MCF 10A (cell line): ENCODE measurements at regions of chr10 and their contacts with region 1.

Region 1: GRCh38 chr10:60795465-60796202 is 17.4 kb downstream of the CDK1 start:
- DNase-seq: no peak
- H3K4me3 Mint-ChIP-seq: no peak overlapping the region
- H3K27ac Mint-ChIP-seq: peak overlapping the region; percentile 11
- H3K4me1 Mint-ChIP-seq: peaks cover 20% of the 10 kb centered on the region
- H3K27me3 Mint-ChIP-seq: no peaks in the 10 kb centered on the region
- CTCF ChIP-seq: no peak

Region 2: DNA sequence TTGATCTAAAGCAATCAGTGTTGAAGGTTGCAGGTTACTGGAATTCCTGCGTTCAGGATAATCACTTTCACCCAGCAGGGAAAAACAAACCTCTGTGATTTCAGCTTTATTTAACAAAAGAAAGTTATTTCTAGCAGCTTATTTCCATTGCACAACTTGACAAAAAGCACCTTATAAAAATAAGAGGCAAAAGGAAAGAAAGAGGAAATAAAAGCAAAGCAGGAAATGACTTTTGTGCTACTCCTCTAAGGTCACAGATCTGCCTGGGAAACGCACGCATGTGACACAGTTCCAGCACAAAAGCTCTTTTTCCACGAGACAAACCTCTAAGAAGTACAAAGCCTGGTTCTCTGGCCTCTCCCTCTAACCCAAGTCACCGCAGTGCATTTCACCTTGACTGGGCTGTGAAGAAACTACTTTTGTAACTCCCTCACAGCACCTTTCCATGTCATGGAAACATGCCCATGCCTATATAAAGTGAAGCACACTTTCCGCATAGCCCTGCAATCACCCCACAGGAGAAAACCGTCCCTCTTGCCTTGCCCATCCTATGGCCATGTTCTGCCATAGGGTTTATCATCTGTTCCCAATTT is 406.8 kb before region 1 on chr10:
- CTCF ChIA-PET with region 1: no interaction called
- POLR2A ChIA-PET with region 1: no interaction called
- intact Hi-C with region 1: no loop called
- DNase-seq: no peak
- H3K4me3 Mint-ChIP-seq: no peak overlapping the region
- H3K27ac Mint-ChIP-seq: peak overlapping the region; percentile 48
- H3K4me1 Mint-ChIP-seq: peaks cover 13% of the 10 kb centered on the region
- H3K27me3 Mint-ChIP-seq: no peaks in the 10 kb centered on the region
- CTCF ChIP-seq: no peak

Region 3: GRCh38 chr10:60784641-60785040 is 11.0 kb before region 1 on chr10:
- CTCF ChIA-PET with region 1: interaction called, 6 read pairs
- POLR2A ChIA-PET with region 1: interaction called, 74 read pairs
- intact Hi-C with region 1: no loop called
- DNase-seq: no peak
- H3K4me3 Mint-ChIP-seq: no peak overlapping the region
- H3K27ac Mint-ChIP-seq: peak overlapping the region; percentile 99
- H3K4me1 Mint-ChIP-seq: peaks cover 54% of the 10 kb centered on the region
- H3K27me3 Mint-ChIP-seq: no peaks in the 10 kb centered on the region
- CTCF ChIP-seq: no peak